GM10248 (cell line): ENCODE measurements at regions of chr5 and their contacts with region 1.

Region 1: GRCh38 chr5:177568326-177568725 is 14.0 kb upstream of the FAM193B start:
- DNase-seq: no peak
- CTCF ChIP-seq: no peak

Region 2: DNA sequence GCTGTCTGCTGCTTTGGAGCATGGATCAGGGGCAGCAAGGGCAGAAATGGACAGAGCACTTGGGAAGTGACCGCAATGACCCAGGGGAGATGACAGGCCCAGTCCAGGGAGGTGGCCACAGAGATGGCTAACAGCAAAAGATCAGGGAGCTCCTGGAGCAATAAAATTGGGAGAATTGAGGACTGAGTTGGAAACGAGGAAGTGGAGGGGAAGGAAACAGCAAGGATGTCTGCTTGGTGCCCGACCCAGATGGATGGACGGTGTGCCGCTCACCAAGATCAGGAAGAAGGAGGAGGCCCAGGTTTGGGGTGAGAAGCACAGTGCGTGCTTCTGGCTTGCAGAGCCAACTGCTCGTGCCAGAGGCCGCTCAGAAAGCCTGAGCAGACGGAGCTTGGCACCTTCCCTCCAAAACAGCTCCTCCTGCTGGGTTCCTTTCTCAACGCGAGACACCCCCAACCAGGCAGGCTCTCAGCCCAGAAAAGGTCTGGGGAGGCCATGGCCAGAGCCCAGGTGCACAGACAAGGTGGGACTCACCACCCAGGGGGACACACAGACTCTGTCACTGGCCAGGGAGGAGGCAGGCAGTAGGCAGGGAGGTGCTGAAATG is 185.8 kb before region 1 on chr5:
- CTCF ChIA-PET with region 1: no interaction called
- POLR2A ChIA-PET with region 1: no interaction called
- DNase-seq: no peak
- CTCF ChIP-seq: peak; percentile 25

Region 3: DNA sequence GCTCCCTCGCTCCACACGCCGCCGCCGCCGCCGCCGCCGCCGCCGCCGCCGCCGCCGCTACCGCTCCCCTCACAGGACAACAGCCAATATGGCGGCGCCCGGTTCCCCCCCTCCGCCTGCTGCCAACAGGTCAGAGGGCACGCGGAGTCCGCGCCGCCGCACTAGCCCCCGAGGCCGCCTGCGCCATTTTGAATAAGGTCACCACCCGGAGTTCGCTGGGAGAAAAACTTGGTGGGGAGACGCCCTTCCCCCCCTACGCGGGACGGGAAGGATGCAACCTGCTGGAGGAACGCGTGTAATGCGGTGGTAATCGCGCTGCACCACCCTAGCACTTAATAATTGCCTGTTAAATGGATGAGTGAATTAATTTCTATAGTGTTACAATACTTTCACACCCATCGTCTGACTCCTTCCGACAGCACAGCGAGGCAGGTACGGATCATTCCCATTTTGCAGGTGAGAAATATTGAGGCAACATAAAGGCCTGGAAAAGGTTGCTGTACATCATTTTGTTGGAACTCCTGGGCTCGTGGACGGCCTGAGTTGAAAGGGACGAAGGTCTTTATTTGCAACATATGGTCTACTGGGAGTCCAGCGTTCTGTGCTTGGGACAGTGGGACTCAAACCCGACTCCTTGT is 13.7 kb before region 1 on chr5 and contains the start of gene FAM193B:
- CTCF ChIA-PET with region 1: interaction called, 15 read pairs
- POLR2A ChIA-PET with region 1: no interaction called
- DNase-seq: peak; percentile 99
- CTCF ChIP-seq: no peak